GM12878 (cell line): ENCODE measurements at regions of chr2 and their contacts with region 1.

Region 1: GRCh38 chr2:85642725-85643124 is 25.3 kb downstream of the SFTPB start:
- DNase-seq: peak; percentile 42
- ATAC-seq: peak; percentile 99
- H3K4me3 ChIP-seq: no peak overlapping the region
- H3K27ac ChIP-seq: no peak overlapping the region
- H3K4me1 ChIP-seq: peaks cover 8% of the 10 kb centered on the region
- H3K27me3 ChIP-seq: no peaks in the 10 kb centered on the region
- CTCF ChIP-seq: no peak
- EP300 ChIP-seq: no peak
- POLR2A ChIP-seq: no peak
- RAD21 ChIP-seq: no peak

Region 2: GRCh38 chr2:85308896-85309555 is 333.7 kb before region 1 on chr2:
- CTCF ChIA-PET with region 1: no interaction called
- POLR2A ChIA-PET with region 1: no interaction called
- RAD21 ChIA-PET with region 1: no interaction called
- SMC1A ChIA-PET with region 1: no interaction called
- in situ Hi-C with region 1: no loop called
- intact Hi-C with region 1: no loop called
- DNase-seq: no peak
- ATAC-seq: peak; percentile 54
- H3K4me3 ChIP-seq: no peak overlapping the region
- H3K27ac ChIP-seq: no peak overlapping the region
- H3K4me1 ChIP-seq: peaks cover 19% of the 10 kb centered on the region
- H3K27me3 ChIP-seq: no peaks in the 10 kb centered on the region
- CTCF ChIP-seq: no peak
- EP300 ChIP-seq: no peak
- POLR2A ChIP-seq: no peak; the same call in 1 of the 2 replicates
- RAD21 ChIP-seq: no peak

Region 3: DNA sequence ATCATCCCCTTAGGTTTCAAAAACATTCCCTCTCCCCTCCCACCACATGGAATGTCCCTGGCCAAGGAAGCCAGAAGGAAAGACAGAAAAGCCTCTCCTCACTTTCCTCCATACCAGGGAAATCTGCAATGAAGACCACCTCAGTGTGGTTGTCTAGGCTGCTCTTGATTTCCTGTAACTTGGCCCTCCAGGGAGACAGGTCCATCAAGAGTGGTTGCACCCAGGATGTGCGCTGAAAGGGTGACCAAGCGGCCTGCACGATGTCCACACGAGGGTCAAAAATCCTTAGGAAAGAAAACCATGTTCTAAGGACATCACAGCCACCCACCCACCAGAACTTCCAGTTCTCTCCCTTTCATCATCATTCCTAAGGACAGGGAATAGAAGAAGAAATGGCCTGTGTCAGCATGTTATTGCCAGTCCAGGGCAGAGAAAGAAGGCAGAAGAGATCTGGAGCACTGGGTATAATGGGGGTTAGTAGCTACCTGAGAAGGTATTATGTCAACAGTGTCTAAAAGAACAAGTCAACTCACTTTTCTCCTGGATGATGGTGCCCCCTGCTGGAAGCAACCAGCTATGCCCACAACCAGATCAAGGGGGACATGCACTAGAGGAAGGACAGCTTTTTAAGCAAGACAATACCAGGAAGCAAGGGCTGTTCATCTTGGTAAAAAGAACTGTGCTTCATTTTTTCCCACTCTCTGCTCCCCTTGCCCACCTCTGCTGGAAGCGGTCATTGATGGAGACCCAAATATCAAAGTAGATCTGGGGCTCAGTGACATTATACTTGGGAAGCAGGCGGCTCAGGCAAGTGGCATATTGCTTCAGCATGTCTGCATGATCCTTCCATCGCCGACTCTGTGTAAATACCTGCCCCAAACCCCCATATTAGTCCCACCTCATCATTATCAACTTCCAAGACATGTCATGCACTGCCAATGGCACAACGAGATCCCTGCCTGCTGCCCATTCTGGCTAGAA is 90.7 kb before region 1 on chr2:
- CTCF ChIA-PET with region 1: interaction called, 10 read pairs
- POLR2A ChIA-PET with region 1: no interaction called
- RAD21 ChIA-PET with region 1: no interaction called
- SMC1A ChIA-PET with region 1: interaction called, 5 read pairs
- in situ Hi-C with region 1: no loop called
- intact Hi-C with region 1: no loop called
- DNase-seq: peak; percentile 56
- ATAC-seq: peak; percentile 91
- H3K4me3 ChIP-seq: no peak overlapping the region
- H3K27ac ChIP-seq: no peak overlapping the region
- H3K4me1 ChIP-seq: no peaks in the 10 kb centered on the region
- H3K27me3 ChIP-seq: no peaks in the 10 kb centered on the region
- CTCF ChIP-seq: peak; percentile 84 to 93 (median 92)
- EP300 ChIP-seq: no peak
- POLR2A ChIP-seq: no peak
- RAD21 ChIP-seq: peak; percentile 95

Region 4: DNA sequence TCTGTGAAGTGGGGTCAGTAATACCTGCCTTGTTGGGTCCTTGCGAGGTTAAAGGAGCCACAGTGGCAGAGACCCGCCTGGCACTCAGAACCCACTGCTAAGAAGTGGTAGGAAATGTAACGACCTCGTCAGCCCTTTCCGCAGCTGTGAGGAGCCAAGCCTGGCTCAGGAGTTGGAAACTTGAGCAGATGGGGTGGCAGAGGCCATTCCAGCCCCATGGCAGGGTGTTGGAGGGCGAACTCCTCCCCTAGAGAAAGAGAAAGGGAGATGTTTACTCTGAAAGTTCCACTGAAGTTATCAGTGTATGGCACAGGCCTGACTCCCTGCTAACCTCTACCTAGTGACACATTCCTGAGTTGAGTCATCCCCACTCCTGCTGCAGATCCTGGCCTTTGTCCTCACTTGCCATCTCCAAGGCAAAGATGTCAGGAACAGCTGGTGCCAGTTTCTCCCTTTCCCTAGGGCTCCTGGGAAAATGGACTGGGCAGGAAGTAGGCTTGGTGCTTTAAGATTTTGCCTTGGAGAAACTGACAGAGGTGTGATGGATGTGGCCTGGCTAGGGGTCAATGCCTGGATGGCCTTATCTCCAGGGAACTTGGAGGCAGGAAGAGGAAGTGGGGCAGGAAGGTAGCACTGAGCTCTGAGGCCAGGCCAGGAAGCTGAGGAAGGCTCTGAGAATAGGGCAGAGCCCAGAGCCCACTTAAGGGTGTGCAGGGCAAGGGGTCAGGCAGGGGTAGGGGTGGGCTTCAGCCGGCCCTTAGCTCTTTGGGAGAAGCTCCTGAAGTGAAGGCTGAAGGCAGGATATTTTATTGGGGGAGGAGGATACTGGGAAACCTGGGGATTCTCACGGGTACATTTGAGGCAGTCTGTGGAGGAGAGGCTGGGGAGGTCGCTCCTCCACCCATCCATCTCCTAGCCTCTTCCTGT is 57.6 kb before region 1 on chr2:
- CTCF ChIA-PET with region 1: no interaction called
- POLR2A ChIA-PET with region 1: no interaction called
- RAD21 ChIA-PET with region 1: no interaction called
- SMC1A ChIA-PET with region 1: no interaction called
- in situ Hi-C with region 1: no loop called
- intact Hi-C with region 1: no loop called
- DNase-seq: no peak
- ATAC-seq: peak; percentile 49
- H3K4me3 ChIP-seq: peak overlapping the region; percentile 72
- H3K27ac ChIP-seq: peak overlapping the region; percentile 64
- H3K4me1 ChIP-seq: peaks cover 21% of the 10 kb centered on the region
- H3K27me3 ChIP-seq: no peaks in the 10 kb centered on the region
- CTCF ChIP-seq: no peak
- EP300 ChIP-seq: no peak
- POLR2A ChIP-seq: no peak
- RAD21 ChIP-seq: no peak

Region 5: DNA sequence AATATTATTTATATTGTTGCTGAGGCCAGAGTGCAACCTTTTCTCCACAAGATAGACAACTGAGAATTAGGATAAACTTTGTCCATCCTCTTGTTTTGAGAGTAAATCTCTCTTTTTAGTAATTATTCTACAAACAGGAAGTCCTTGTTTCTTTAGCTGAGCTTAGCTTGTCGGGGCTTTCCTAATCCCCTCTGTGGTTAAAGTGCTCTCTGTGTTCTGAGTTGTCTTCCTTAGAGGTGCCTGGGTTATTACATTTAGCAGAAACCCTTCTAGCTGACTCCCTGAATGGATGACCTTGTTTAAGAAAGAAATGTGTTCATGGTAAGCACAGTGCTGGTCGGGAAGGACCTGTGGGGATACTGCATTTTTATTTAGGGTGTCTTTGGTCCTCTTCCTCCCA is 14.1 kb before region 1 on chr2:
- CTCF ChIA-PET with region 1: interaction called, 31 read pairs
- POLR2A ChIA-PET with region 1: interaction called, 4 read pairs
- RAD21 ChIA-PET with region 1: interaction called, 7 read pairs
- SMC1A ChIA-PET with region 1: interaction called, 20 read pairs
- in situ Hi-C with region 1: no loop called
- intact Hi-C with region 1: no loop called
- DNase-seq: no peak
- ATAC-seq: peak; percentile 97
- H3K4me3 ChIP-seq: no peak overlapping the region
- H3K27ac ChIP-seq: peak overlapping the region; percentile 38
- H3K4me1 ChIP-seq: no peaks in the 10 kb centered on the region
- H3K27me3 ChIP-seq: no peaks in the 10 kb centered on the region
- CTCF ChIP-seq: no peak
- EP300 ChIP-seq: no peak
- POLR2A ChIP-seq: no peak
- RAD21 ChIP-seq: no peak

Region 6: GRCh38 chr2:85702172-85702571 is 59.4 kb after region 1 on chr2:
- CTCF ChIA-PET with region 1: interaction called, 162 read pairs
- POLR2A ChIA-PET with region 1: no interaction called
- RAD21 ChIA-PET with region 1: interaction called, 42 read pairs
- SMC1A ChIA-PET with region 1: interaction called, 71 read pairs
- in situ Hi-C with region 1: loop called (anchors 5 kb)
- intact Hi-C with region 1: loop called (anchors 2 kb)
- DNase-seq: no peak
- ATAC-seq: peak; percentile 3; the same call in 1 of the 3 replicates
- H3K4me3 ChIP-seq: no peak overlapping the region
- H3K27ac ChIP-seq: no peak overlapping the region
- H3K4me1 ChIP-seq: peaks cover 21% of the 10 kb centered on the region
- H3K27me3 ChIP-seq: no peaks in the 10 kb centered on the region
- CTCF ChIP-seq: no peak
- EP300 ChIP-seq: no peak
- POLR2A ChIP-seq: no peak
- RAD21 ChIP-seq: no peak

Region 7: DNA sequence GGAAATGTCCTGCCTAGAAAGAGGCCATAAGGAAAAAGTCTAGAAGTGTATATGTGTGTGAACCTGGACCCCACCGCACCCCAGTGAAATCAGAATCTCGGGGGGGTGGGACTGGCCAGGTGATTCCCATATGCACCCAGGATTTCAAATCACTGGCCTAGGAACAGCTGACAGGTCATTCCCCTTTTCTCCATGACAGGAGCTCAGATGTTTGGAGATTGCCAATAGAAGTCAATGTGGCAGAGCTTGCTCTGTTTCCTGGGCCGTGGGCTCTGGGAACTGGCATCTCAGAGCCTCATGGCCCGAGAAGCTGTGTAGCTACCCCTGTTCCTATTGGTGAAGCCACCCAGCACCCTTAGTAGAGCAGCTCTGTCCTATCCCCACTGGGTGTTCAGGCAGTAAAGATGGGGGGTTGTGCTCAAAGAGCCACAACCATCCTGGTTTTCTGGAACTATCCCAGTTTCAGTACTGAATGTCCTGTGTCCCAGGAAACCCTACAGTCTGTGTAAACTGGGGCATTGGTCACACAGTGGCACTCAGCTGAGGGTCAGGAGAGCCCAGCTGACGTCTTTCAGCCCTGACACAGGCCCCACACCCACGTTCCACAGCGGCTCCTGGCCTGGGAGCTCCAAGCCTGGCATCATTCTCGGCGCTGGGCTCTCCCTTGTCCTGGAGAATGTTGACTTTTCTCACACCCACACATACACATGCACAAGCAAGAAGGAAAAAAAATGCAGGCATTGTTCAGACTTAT is 70.3 kb after region 1 on chr2:
- CTCF ChIA-PET with region 1: interaction called, 162 read pairs
- POLR2A ChIA-PET with region 1: no interaction called
- RAD21 ChIA-PET with region 1: interaction called, 42 read pairs
- SMC1A ChIA-PET with region 1: interaction called, 71 read pairs
- in situ Hi-C with region 1: loop called (anchors 5 kb)
- intact Hi-C with region 1: no loop called
- DNase-seq: no peak
- ATAC-seq: no peak
- H3K4me3 ChIP-seq: no peak overlapping the region
- H3K27ac ChIP-seq: no peak overlapping the region
- H3K4me1 ChIP-seq: no peaks in the 10 kb centered on the region
- H3K27me3 ChIP-seq: no peaks in the 10 kb centered on the region; a peak in 1 of 4 replicates
- CTCF ChIP-seq: no peak
- EP300 ChIP-seq: no peak
- POLR2A ChIP-seq: no peak
- RAD21 ChIP-seq: no peak

Region 8: DNA sequence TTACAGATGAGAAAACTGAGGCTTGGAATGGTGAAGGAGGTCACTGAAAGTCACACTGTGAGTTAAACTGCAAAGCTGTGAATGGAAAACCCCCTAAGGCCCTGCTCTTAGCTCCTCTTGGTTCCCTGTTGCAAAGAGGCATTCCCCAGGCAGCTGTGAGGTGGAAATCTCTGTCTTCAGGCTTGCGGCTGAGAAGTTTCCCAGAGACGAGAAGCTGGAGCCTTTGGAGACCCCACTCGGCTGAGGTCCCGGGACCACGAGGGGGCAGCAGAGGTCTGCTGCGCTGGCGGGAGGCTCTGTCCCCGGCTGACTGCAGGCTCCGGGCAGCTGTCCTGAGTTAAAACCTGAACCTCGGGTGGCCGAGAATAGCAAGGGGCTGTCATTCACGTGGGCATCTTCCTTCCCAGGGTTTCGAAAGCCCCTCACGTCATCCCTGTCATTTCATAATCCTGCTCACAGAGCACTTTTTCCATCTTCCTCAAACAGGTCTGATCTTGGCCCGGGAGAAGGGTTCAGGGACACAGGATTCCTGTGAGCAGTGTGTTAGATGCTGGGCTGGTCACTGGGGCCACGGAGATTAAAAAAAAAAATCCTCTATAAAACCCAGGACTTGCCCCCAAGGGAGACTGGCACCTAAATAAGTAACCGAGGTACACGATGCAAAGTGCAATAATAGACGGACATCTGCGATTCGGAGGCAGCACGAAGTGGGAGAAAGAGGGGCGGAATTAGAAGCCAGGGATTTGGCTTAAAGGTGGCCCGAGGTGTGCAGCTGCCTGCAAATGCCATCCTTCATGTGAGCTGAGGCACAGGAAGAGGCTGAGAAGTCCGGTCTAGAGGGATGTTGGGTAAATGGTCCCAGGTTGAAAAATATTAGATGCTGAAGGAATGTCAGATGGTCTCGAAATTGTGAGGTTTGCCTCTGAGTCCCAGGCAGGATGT is 86.4 kb after region 1 on chr2:
- CTCF ChIA-PET with region 1: interaction called, 28 read pairs
- POLR2A ChIA-PET with region 1: no interaction called
- RAD21 ChIA-PET with region 1: interaction called, 15 read pairs
- SMC1A ChIA-PET with region 1: interaction called, 12 read pairs
- in situ Hi-C with region 1: no loop called
- intact Hi-C with region 1: loop called (anchors 5 kb)
- DNase-seq: no peak
- ATAC-seq: peak; percentile 98
- H3K4me3 ChIP-seq: no peak overlapping the region
- H3K27ac ChIP-seq: no peak overlapping the region
- H3K4me1 ChIP-seq: no peaks in the 10 kb centered on the region; the same call in 1 of the 2 replicates
- H3K27me3 ChIP-seq: no peaks in the 10 kb centered on the region
- CTCF ChIP-seq: peak; percentile 96 to 99 (median 99); a peak in 5 of 6 replicates
- EP300 ChIP-seq: no peak
- POLR2A ChIP-seq: no peak
- RAD21 ChIP-seq: peak; percentile 94

Region 9: DNA sequence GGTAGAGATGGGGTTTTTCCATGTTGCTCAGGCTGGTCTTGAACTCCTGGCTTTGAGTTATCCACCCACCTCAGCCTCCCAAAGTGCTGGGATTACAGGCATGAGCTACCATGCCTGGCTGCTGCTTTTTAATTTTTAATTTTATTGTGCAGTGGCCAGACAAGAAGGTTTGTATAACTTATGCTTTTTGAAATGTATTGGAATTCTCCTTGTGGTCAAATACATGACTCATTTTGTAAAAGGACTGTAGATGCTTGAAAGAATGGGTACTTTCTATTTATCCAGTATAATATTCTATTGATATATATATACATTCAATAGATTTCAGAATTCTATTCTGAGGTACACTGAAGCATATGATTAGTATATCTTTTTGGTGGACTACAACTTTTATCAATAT is 328.6 kb after region 1 on chr2:
- CTCF ChIA-PET with region 1: no interaction called
- POLR2A ChIA-PET with region 1: no interaction called
- RAD21 ChIA-PET with region 1: no interaction called
- SMC1A ChIA-PET with region 1: no interaction called
- in situ Hi-C with region 1: no loop called
- intact Hi-C with region 1: no loop called
- DNase-seq: no peak
- ATAC-seq: no peak
- H3K4me3 ChIP-seq: no peak overlapping the region
- H3K27ac ChIP-seq: no peak overlapping the region
- H3K4me1 ChIP-seq: no peaks in the 10 kb centered on the region
- H3K27me3 ChIP-seq: no peaks in the 10 kb centered on the region
- CTCF ChIP-seq: no peak
- EP300 ChIP-seq: no peak
- POLR2A ChIP-seq: no peak
- RAD21 ChIP-seq: no peak